Activated CD4-positive, alpha-beta T cell treated with anti-CD3 and anti-CD28 coated beads, Interleukin-2, amount 10 ng/mL, durations not matched to agents 24 days and 14 days (primary cell): ENCODE measurements at regions of chr1 and their contacts with region 1.

Region 1: DNA sequence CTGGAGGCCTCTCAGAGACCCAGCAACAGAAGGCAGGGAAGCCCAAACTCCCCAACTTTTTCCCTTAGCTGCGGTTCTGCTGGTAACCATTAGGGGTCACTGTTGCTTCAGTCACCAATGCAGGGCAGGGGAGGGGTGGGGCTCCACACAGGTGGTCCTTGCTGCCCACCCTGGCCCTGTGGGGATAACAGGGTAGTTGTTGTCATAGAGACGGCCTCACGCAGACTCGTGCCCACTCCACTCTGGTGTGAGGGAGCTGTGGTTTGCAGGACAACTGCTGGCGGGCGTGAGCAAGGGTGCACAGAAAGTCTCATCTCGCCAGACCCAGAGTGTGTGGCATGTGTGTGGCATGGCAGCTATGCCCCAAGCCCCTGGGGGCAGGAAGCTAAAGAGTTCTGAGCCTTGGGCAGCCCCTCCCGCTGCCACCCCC is 19.9 kb downstream of the INSRR start:
- DNase-seq: peak; percentile 87
- H3K4me3 Mint-ChIP-seq: peak overlapping the region; percentile 58
- H3K27ac Mint-ChIP-seq: peak overlapping the region; percentile 46
- H3K4me1 Mint-ChIP-seq: peaks cover 51% of the 10 kb centered on the region
- H3K27me3 Mint-ChIP-seq: peaks cover 19% of the 10 kb centered on the region

Region 2: DNA sequence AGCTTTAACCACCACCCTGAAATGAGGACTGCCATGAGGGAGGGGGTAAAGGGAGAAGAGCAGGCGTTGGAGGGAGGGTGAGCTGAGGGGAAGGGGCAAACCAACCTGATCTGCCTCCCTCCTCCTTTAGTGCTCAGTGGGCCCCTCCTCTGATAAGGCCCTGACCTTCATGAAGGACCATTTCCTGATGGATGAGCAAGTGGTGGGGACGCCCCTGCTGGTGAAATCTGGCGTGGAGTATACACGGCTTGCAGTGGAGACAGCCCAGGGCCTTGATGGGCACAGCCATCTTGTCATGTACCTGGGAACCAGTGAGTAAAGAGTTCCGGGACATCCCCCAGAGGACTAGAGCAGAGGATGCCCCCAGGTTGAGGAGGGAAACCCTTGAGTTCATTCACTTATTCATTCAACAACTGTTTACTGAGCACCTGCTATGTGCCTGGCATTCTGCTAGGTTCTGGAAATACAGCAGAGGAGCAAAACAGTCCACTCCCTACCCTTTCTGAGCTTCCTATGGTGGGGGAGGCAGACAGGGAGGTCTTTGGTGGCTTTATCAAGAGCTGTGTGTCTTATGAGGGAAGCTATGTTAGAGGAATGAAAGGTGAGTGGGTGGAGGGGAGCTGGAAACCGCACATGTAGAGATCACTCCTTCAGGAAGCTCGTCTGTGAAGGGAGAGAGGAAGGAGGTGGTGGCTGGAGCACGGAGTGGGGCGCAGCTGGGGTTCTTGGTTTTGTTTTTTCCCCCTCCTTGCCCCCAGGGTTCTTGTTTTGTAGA is 666.1 kb before region 1 on chr1:
- intact Hi-C with region 1: no loop called
- DNase-seq: no peak
- H3K4me3 Mint-ChIP-seq: no peak overlapping the region
- H3K27ac Mint-ChIP-seq: no peak overlapping the region
- H3K4me1 Mint-ChIP-seq: peaks cover 8% of the 10 kb centered on the region
- H3K27me3 Mint-ChIP-seq: no peaks in the 10 kb centered on the region

Region 3: DNA sequence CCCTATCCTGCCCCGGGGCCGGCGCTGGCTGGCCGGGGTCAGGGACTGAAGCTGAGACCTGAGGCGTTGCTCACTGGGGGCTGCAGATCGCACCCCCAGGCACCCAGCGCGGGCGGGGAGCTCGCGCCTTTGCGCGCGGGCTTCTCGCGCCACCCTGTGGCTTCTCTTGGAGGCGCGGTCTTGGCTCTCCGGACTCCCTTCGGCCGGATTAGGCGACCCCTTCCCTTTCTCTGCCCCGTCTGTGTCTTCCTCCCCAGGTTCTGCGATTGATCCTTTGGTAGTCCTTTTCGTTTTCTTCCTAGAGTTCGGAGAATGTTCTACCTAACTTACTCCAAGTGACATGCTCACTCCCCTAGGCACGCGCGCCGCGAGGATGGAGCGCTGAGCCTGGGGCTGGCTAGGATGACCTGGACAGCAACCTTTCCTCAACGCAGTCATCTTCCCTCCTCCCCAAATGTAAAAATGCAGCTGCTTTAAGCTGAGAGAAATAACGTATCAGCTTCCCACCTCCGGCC is 21.2 kb after region 1 on chr1:
- intact Hi-C with region 1: loop called (anchors 1 kb)
- DNase-seq: peak; percentile 91
- H3K4me3 Mint-ChIP-seq: peak overlapping the region; percentile 80
- H3K27ac Mint-ChIP-seq: peak overlapping the region; percentile 18
- H3K4me1 Mint-ChIP-seq: peaks cover 51% of the 10 kb centered on the region
- H3K27me3 Mint-ChIP-seq: peaks cover 25% of the 10 kb centered on the region

Region 4: GRCh38 chr1:156876281-156876680 is 37.3 kb after region 1 on chr1:
- intact Hi-C with region 1: no loop called
- DNase-seq: no peak
- H3K4me3 Mint-ChIP-seq: no peak overlapping the region
- H3K27ac Mint-ChIP-seq: no peak overlapping the region
- H3K4me1 Mint-ChIP-seq: no peaks in the 10 kb centered on the region
- H3K27me3 Mint-ChIP-seq: peaks cover 2% of the 10 kb centered on the region

Region 5: DNA sequence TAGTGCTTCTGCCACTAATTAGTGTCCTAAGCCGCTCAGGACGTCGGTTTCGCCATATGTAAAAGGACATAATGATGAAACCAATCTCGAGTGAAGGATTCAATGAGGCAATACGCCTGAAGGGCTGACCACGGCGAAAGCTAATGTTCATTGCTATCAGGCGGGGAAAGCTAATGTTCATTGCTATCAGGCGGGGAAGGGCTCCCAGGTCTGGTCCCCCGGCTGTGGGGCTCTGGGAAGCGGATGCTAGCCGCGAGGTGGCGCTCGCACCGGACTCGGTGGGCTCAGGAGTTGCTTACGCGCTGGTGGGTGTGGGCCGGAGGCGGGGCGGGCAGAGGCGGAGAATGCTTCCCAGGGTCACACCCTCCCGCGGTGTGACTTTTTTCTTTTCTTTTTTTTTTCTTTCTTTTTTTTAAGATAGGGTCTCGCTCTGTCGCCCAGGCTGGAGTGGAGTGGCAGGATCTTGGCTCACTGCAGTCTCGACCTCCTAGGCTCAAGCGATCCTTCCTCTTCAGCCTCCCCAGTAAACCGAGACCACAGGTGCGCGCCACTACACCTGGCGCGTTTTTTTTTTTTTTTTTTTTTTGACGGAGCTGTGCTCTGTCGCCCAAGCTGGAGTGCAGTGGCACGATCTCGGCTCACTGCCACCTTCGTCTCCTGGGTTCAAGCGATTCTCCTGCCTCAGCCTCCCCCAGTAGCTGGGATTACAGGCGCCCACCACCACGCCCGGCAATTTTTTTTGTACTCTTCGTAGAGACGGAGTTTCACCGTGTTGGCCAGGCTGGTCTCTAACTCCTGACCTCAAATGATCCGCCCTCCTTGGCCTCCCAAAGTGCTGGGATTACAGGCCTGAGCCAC is 53.4 kb after region 1 on chr1:
- intact Hi-C with region 1: loop called (anchors 1 kb)
- DNase-seq: peak; percentile 96
- H3K4me3 Mint-ChIP-seq: peak overlapping the region; percentile 66
- H3K27ac Mint-ChIP-seq: no peak overlapping the region
- H3K4me1 Mint-ChIP-seq: peaks cover 13% of the 10 kb centered on the region
- H3K27me3 Mint-ChIP-seq: peaks cover 36% of the 10 kb centered on the region

Region 6: GRCh38 chr1:156920233-156921052 is 81.4 kb after region 1 on chr1 and contains the start of gene LRRC71:
- intact Hi-C with region 1: loop called (anchors 5 kb)
- DNase-seq: peak; percentile 94
- H3K4me3 Mint-ChIP-seq: peak within 1 kb of the TSS; percentile 45
- H3K27ac Mint-ChIP-seq: no peak within 1 kb of the TSS
- H3K4me1 Mint-ChIP-seq: peaks cover 5% of the 10 kb centered on the region
- H3K27me3 Mint-ChIP-seq: peaks cover 73% of the 10 kb centered on the region
- total RNA-seq, gene LRRC71: not detected in 2 replicates

Region 7: DNA sequence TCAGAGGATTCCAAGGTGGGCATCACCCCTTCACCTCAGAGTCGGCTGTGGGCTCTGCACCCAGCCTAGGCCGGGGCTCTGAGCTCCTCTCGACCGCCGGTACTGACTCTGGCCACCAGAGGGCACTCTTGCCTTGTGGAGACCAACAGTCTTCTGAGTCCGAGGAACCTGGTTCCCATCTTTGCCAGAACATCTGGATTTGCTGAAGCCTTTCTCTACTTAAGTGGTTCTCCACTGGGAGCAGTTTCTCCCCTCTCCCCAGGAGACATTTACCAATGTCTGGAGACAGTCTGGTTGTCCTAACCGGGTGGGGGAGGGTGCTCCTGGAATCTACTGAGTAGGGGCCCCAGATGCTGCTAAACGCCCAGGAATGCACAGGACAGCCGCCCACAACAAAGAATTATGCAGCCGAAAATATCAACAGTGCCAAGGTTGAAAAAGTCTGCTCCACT is 251.2 kb after region 1 on chr1:
- intact Hi-C with region 1: no loop called
- DNase-seq: peak; percentile 96
- H3K4me3 Mint-ChIP-seq: no peak overlapping the region
- H3K27ac Mint-ChIP-seq: no peak overlapping the region
- H3K4me1 Mint-ChIP-seq: peaks cover 2% of the 10 kb centered on the region
- H3K27me3 Mint-ChIP-seq: peaks cover 2% of the 10 kb centered on the region